Tibial artery (tissue), 4 donors: ENCODE measurements at regions of chr3 and their contacts with region 1.

Region 1: DNA sequence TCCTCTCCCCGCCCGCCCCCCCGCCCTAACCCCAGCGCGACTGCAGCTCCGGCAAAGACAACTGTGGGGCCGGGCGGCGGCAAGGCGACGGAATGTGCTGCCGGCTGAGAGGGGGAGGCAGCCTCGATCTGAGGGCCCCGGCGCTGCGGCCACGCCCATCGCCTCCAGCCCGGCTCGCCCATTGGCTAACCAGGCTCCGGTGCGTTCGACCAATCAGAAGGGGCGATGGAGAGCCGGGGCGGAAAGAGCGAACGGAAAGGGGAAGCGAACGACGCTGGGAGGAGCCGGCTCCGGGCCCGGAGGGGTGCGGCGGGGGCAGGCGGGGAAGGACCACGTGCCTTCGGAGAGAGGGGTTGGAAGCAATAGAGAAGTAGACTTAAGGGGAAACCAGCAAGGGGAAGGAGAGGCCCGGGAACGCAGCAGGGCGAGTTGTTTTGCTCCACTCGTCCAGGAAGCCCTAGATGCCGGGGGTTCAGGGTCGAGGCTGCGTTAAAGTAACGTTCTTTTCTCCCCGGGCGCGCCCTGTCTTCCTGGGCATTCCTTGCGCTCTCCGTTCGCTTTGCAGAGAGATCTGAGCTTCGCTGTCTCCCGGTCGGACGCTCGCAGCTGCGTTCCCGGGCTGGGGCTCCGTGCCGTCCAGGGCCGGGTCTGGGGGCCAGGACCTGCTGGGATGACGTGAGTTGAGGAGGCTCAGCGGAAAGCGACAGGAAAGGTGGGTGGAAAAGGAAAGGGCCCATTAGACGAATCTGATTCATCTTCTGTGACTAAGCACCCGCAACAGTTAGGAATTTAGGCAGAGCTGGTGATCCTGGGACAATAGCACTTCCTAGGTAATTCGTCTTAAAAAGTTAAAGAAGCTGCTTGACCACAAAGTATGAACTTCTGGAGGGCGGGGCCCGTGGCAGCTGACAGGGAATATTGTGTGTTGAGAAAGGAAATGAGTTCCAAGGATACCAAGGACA is at the start of gene KPNA4:
- DNase-seq: peak; percentile 98 to 99
- H3K4me3 ChIP-seq: peak within 1 kb of the TSS; percentile 75 to 88
- H3K27ac ChIP-seq: peak within 1 kb of the TSS; percentile 96 to 99
- H3K4me1 ChIP-seq: peaks cover 0 to 42% (median 26%) of the 10 kb centered on the region in 4 donors
- H3K27me3 ChIP-seq: no peaks in the 10 kb centered on the region
- CTCF ChIP-seq: no peak

Region 2: DNA sequence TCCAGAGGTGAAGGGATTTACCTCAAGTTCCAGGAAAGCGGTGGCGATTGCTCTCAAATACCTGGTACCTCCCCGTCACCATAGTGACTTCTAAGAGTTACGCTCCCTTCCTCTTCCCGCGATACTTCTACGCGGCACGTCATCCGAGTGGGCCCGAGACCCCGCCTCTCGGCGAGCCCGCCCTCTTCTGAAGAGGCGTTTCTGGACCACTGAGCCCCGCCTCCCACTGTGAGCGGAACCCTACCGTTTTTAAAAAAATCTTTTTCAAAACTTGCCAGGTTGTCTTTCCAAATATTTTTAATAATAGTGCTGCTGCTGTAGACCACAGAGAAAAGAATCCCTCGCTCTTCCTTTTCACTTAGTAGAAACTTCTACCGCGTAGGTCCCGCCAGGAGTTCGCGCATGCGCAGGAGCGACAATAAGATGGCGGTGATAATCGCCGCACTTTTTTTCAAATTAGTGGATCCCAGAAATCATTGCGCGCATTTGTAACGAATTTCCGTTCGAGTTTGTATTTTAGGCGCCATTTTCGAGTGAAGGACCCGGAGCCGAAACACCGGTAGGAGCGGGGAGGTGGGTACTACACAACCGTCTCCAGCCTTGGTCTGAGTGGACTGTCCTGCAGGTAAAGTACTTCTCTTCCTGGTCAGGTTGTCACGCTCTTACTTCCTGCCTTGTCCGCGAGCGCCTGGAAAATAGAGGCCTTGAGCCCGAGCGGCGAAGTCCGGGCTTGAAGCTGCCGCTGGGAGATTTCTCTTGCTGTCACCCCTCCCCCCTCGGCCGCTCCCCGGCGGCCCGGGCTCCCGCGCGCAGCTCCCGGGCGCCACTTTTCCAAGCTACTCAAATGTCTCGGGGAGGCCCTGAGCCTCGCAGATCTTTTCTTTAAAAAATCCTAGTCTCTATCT is 166.3 kb before region 1 on chr3 and contains the starts of genes IFT80 and SMC4:
- intact Hi-C with region 1: loop called (anchors 10 kb)
- DNase-seq: peak; percentile 95 to 98
- H3K4me3 ChIP-seq: peak within 1 kb of the TSS; percentile 63 to 81
- H3K27ac ChIP-seq: peak within 1 kb of the TSS; percentile 87 to 88
- H3K4me1 ChIP-seq: peaks cover 0 to 17% (median 14%) of the 10 kb centered on the region in 4 donors
- H3K27me3 ChIP-seq: no peaks in the 10 kb centered on the region
- CTCF ChIP-seq: peak in 1 of 2 experiments; percentile 11

Region 3: GRCh38 chr3:160616716-160617115 is 51.0 kb after region 1 on chr3:
- intact Hi-C with region 1: no loop called
- DNase-seq: no peak
- H3K4me3 ChIP-seq: no peak overlapping the region
- H3K27ac ChIP-seq: no peak overlapping the region
- H3K4me1 ChIP-seq: no peaks in the 10 kb centered on the region
- H3K27me3 ChIP-seq: no peaks in the 10 kb centered on the region
- CTCF ChIP-seq: no peak